Mucosa of descending colon (tissue), 3 donors: ENCODE measurements at regions of chr12 and their contacts with region 1.

Region 1: DNA sequence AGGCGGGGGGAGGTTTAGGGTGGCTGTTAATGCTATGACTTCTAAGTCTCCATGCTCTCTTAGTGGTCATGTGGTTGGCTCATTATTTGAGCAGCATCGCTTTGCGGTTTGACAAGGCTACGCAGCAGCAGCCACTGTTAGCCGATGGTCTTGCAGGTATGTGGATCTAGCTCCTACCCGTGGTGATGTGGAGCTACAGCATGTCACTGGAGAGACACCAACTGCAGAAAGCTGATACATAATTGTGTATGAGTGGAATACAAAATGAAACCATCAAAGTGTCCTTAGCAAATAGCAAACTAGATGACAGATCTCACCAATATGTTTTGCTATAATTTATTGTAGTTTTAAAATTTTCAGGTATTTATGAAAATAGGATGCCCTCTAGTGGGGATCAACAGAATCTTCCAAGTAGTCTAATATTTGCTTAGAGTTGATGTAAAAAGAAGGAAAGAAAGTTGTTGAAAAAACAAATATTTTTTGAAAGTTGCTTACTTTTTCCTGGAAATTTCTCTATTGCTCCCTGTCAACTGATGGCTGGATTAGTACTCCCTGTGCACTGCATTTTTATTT is 94.9 kb downstream of the NAV3 start:
- DNase-seq: peak; percentile 48 to 75 (median 54)
- ATAC-seq: peak; percentile 92
- H3K4me3 ChIP-seq: no peak overlapping the region
- H3K4me1 ChIP-seq: no peaks in the 10 kb centered on the region
- CTCF ChIP-seq: peak; percentile 73

Region 2: DNA sequence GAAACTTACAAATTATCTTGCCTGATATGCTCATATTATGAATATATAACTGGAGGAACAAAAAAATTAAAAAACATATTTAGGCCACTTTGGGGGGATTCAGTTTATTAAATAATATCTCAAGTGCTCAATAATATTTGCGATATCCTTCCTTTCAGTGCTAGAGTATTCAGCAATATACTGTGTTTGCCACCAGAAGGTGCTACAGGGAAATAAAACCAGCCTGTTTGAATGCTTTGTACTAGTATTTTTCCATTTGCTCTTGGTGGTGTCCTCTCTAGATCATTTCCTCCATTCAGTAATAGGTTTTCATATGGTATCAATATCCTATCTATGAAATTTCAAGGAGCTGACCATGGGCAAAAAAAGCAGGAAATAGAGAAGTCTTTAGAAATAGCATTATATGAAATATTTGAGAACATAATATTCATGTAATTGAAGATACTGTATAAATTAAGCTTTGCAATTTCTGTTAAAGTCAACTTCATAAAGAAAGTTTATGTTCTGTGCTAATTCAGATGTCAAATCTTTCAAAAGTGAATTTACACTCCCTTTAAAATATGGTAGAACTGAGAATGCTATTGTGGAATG is 201.2 kb before region 1 on chr12:
- intact Hi-C with region 1: loop called (anchors 2 to 10 kb)
- DNase-seq: peak in 1 of 3 donors; percentile 4
- ATAC-seq: no peak
- H3K4me3 ChIP-seq: no peak overlapping the region
- H3K4me1 ChIP-seq: no peaks in the 10 kb centered on the region
- CTCF ChIP-seq: no peak